ENCODE measurements at regions of chr12 and their contacts with region 1.

Region 1: DNA sequence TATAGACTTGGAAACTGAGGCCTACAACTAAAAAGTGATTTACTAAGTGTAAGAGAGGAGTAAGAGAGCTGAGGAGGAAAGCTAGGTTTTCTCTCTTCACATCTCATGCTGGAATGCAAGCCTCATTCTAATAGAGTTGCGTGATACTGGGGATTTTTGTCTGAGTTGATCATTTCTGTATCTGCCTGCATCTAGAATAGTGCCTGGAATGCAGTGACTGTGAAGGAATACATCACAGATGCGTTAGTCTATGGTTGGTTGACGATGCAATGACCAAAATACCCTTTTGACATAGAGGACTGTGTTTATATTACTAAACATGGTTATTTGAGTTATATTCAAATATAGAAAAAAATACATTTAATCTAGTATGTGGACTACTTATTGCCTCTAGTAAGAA is 9.2 kb upstream of the TMEM117 start:
- DNase-seq: no peak
- ATAC-seq: no peak

Region 2: GRCh38 chr12:43758247-43758727 is 68.4 kb before region 1 on chr12:
- intact Hi-C with region 1: loop called (anchors 2 kb)
- DNase-seq: peak; percentile 58
- ATAC-seq: peak; percentile 14

Measured in sciatic nerve (tissue), 2 donors.